Upper lobe of right lung (tissue), 1 donor: ENCODE measurements at regions of chr6 and their contacts with region 1.

Region 1: GRCh38 chr6:158962371-158962770 is 37.6 kb downstream of the RSPH3 start:
- DNase-seq: no peak
- ATAC-seq: no peak
- H3K4me3 ChIP-seq: no peak overlapping the region
- H3K27ac ChIP-seq: no peak overlapping the region
- H3K4me1 ChIP-seq: no peaks in the 10 kb centered on the region
- H3K27me3 ChIP-seq: no peaks in the 10 kb centered on the region
- CTCF ChIP-seq: no peak

Region 2: DNA sequence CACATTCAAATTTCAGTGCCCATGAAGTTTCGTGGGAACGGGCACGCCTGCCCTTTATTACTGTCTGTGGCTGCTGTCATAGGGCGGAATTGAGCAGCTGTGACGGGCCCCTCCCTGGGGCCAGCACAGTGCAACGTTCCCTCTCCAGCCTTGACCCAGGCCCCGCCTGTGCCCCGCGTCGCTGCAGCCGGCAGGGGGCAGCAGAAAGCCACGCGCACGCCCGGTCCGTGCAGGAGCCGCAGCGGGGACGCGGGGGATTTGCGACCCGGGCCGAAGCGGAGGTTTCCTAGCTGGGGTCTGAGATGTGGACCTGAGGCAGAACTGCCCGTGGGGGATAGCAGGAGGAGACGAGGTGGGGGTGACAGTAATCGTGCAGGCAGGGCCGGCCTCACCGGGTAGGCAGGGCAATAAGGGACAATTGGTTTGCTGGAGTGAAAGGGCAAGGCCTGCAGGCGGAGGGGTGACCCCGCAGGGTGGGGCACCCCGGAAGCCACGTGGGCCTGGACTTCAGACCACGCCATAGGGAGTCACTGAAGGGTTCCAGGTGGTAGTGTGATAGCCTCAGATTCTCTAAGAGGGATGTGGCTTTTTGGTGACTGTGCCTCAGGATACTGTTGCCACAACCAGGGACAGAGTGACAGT is 258.1 kb before region 1 on chr6:
- intact Hi-C with region 1: loop called (anchors 10 kb)
- DNase-seq: peak; percentile 93
- ATAC-seq: peak; percentile 95
- H3K4me3 ChIP-seq: peak overlapping the region; percentile 47
- H3K27ac ChIP-seq: peak overlapping the region; percentile 63
- H3K4me1 ChIP-seq: peaks cover 38% of the 10 kb centered on the region
- H3K27me3 ChIP-seq: no peaks in the 10 kb centered on the region
- CTCF ChIP-seq: peak; percentile 99

Region 3: DNA sequence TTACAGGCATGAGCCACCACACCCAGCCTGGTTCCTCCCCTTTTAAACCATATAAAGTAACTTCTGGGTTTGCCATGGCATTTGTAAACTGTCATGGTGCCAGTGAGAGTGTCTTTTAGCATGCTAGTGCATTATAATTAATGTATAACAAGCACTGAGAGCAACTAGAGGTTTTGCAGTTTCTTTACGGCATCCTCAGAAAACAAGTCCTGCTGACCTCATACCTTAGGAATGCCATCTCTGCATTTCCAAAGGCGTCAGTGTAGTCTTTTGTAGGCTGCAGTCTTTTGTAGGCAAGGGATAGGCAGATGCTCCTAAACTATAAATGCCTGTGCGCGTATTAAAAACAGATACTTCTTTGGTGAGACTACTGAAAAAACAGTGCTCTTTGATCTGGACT is 68.2 kb before region 1 on chr6:
- intact Hi-C with region 1: no loop called
- DNase-seq: no peak
- ATAC-seq: peak; percentile 57
- H3K4me3 ChIP-seq: no peak overlapping the region
- H3K27ac ChIP-seq: no peak overlapping the region
- H3K4me1 ChIP-seq: no peaks in the 10 kb centered on the region
- H3K27me3 ChIP-seq: no peaks in the 10 kb centered on the region
- CTCF ChIP-seq: no peak

Region 4: GRCh38 chr6:159203304-159204005 is 241.1 kb after region 1 on chr6:
- intact Hi-C with region 1: no loop called
- DNase-seq: no peak
- ATAC-seq: peak; percentile 35
- H3K4me3 ChIP-seq: no peak overlapping the region
- H3K27ac ChIP-seq: no peak overlapping the region
- H3K4me1 ChIP-seq: no peaks in the 10 kb centered on the region
- H3K27me3 ChIP-seq: no peaks in the 10 kb centered on the region
- CTCF ChIP-seq: no peak